ENCODE measurements at regions of chr7 and their contacts with region 1.

Region 1: DNA sequence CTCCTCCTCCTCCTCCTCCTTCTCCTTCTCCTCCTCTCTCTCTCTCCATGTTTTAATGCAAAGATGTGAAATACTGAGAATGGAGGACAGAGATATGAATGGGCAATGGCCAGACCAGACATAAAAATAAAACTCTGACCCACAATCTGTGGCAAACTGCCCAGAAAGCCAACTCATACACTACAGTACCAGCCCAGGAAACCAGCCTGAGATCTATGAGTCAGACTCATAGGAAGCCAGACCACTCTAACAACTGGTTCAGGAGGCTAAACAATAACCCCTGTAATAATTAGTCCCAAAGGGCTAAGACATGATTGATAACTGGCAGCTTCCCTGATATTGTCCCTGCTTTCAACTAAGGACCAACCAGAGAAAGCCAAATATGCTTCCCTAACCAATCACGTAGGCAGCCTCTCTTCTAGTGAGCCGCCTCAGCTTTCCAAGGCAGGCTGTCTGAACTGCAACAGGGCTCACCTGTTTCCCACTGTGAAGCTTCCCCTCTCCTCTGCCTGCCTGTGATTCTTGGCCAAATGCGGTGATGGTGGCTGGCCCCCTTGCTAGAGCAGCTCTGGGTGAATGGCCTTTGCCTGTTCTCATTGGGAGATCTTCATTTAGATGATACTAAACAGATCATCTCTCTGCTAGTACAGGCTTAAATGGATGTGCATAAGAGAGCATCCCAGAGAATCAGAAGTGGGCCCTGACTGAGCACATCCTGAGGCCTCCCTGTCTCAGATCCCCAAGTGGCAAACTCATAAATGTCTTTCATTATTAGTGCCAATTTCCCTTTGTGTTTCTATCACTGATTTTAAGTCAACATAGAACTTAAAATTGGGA is 817.6 kb downstream of the TNS3 start:
- DNase-seq: peak in 1 of 3 donors; percentile 17
- ATAC-seq: peak; percentile 81 to 93
- H3K4me3 ChIP-seq: no peak overlapping the region
- H3K27ac ChIP-seq: no peak overlapping the region
- H3K4me1 ChIP-seq: peaks cover 5% of the 10 kb centered on the region
- H3K27me3 ChIP-seq: no peaks in the 10 kb centered on the region

Region 2: DNA sequence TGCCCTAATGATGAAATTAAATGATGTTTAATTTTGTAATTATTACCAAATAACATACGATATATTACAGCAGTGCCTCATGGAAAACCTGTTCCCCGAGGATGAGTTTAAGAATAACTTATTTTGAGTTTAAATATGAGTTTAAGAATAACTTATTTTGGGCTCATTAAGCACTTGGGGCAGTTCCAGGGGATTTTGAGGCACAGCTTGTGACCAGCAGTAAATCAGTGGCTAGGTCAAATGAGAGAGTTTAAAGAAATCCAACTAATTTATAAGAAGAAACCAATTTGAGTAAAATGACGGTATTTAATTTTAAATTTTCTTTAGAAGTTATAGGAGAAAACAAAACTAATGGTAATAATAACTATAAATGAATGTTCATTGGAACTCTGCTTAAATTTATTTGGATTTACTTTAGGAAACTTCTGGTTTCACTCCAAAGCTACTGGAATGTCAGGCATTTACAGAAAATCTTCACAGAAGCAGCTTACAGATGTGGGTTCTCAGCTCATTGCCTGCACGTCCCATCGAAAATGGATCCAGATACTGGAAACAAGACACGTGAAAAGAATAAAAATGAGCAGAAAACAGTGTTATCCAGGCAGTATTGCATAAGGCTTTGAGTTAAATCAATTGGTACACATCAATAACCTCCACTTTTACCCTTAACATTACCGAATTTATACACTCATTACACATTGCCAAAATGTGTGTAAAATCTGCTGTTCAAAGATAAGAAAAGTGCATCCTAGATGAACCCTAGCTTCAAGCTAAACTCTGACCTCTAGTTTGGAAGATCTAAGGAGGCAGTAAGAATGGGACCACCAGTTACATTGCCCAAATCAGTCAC is 58.7 kb before region 1 on chr7:
- intact Hi-C with region 1: loop called in 1 of 4 experiments (anchors 10 kb)
- DNase-seq: no peak
- ATAC-seq: no peak
- H3K4me3 ChIP-seq: no peak overlapping the region
- H3K27ac ChIP-seq: no peak overlapping the region
- H3K4me1 ChIP-seq: no peaks in the 10 kb centered on the region
- H3K27me3 ChIP-seq: no peaks in the 10 kb centered on the region